ENCODE measurements at regions of chr3 and their contacts with region 1.

Region 1: DNA sequence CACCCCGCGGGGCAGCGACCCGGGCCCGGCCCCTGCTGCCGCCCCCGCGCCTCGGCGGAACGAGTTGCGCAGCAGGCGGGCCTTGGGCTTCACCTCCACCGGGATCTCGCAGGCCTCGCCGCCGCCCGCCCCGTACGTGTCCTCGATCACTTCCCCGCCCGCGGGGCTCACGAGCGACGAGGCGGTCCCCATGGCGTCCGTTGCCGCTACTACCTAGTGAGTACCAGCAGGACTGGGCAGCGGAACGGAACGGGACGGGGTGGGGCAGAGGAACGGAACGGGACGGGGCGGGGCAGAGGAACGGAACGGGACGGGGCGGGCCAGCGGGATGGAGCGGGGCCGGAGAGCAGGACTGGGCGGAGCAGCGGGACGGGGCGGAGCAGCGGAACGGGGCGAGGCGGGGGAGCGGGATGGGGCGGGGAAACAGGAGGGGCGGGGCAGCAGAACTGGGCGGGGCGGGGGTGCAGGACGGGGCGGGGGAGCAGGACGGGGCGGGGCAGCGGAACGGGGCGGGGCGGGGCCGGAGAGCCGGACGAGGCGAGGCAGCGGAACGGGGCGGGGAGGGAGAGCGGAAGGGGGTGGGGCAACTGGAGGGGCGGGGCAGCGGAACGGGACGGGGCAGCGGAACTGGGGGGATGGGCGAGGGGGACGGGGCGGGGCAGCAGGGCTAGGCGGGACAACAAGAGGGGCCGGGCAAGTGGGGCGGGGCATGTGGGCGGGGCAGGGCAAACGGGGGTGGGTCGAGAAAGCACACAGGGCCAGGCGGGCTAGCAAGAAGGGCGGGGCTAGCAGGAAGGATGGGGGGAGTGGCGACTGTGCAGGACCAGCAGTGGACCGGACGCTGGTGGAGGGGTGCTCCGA is at the start of gene NPHP3:
- DNase-seq: peak; percentile 91 to 99 (median 94)
- H3K4me3 ChIP-seq: peak within 1 kb of the TSS; percentile 76 to 97 (median 89)
- H3K27ac ChIP-seq: peak within 1 kb of the TSS; percentile 62 to 96 (median 90)
- H3K27me3 ChIP-seq: no peaks in the 10 kb centered on the region
- CTCF ChIP-seq: peak in 3 of 56 donors; percentile 3 to 13 (median 8)
- total RNA-seq, gene NPHP3: 12.0 to 55.8 (median 23.8) TPM

Region 2: GRCh38 chr3:132659365-132660051 is 62.9 kb before region 1 on chr3 and contains the start of gene ACAD11:
- intact Hi-C with region 1: loop called in 1 of 2 experiments (anchors 5 kb)
- DNase-seq: peak; percentile 50 to 83 (median 68)
- H3K4me3 ChIP-seq: peak within 1 kb of the TSS; percentile 67 to 99 (median 89)
- H3K27ac ChIP-seq: peak within 1 kb of the TSS; percentile 56 to 97 (median 91)
- H3K27me3 ChIP-seq: no peaks in the 10 kb centered on the region
- CTCF ChIP-seq: peak in 55 of 56 donors; percentile 29 to 70 (median 55)
- total RNA-seq, gene ACAD11: 18.7 to 51.8 (median 32.6) TPM

Region 3: GRCh38 chr3:132843851-132844553 is 121.6 kb after region 1 on chr3:
- intact Hi-C with region 1: loop called in 1 of 2 experiments (anchors 10 kb)
- DNase-seq: peak in 3 of 10 donors; percentile 8 to 44 (median 14)
- H3K4me3 ChIP-seq: no peak overlapping the region
- H3K27ac ChIP-seq: no peak overlapping the region
- H3K27me3 ChIP-seq: no peaks in the 10 kb centered on the region
- CTCF ChIP-seq: no peak

Region 4: DNA sequence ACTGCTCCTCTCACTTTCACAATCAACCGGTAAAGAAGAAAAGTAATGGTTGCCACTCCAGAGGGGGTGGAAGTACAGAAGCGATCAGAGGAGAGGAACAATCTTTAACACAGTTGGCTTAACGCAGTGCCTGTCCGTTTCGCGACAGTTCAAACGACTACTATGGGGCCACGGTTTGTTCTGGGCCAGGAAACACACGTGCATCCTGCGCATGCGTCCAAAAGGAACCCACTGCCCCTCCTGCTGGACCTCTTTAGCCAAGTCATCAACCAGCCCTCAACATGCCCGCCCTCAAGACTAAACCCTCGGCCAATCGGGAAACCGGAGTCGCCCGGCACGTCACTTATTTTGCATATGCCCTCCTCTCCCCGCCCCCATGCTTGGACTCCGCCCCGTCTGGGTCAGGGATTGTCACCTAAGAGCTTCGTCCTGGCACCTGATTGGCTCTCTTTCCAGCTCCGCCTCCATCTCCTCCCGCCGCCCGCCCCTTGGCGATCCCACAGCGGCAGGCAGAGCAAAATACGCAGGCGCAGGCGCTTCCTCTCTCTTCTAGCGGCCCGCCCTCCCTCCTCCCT is 850.7 kb after region 1 on chr3:
- intact Hi-C with region 1: loop called (anchors 2 to 5 kb)
- DNase-seq: peak; percentile 100
- H3K4me3 ChIP-seq: peak overlapping the region; percentile 45 to 99 (median 84)
- H3K27ac ChIP-seq: peak overlapping the region; percentile 6 to 98 (median 90)
- H3K27me3 ChIP-seq: no peaks in the 10 kb centered on the region
- CTCF ChIP-seq: peak in 27 of 56 donors; percentile 7 to 42 (median 20)

Region 5: GRCh38 chr3:133805527-133806475 is 1083.4 kb after region 1 on chr3 and contains the start of gene SRPRB:
- intact Hi-C with region 1: loop called in 1 of 2 experiments (anchors 10 kb)
- DNase-seq: peak; percentile 93 to 97 (median 96)
- H3K4me3 ChIP-seq: peak within 1 kb of the TSS; percentile 58 to 98 (median 91)
- H3K27ac ChIP-seq: peak within 1 kb of the TSS in 38 of 59 donors; percentile 8 to 84 (median 56)
- H3K27me3 ChIP-seq: no peaks in the 10 kb centered on the region
- CTCF ChIP-seq: peak in 36 of 56 donors; percentile 6 to 66 (median 34)
- total RNA-seq, gene SRPRB: 22.8 to 66.1 (median 40.5) TPM